OCI-LY7 (cell line): ENCODE measurements at regions of chr19 and their contacts with region 1.

Region 1: DNA sequence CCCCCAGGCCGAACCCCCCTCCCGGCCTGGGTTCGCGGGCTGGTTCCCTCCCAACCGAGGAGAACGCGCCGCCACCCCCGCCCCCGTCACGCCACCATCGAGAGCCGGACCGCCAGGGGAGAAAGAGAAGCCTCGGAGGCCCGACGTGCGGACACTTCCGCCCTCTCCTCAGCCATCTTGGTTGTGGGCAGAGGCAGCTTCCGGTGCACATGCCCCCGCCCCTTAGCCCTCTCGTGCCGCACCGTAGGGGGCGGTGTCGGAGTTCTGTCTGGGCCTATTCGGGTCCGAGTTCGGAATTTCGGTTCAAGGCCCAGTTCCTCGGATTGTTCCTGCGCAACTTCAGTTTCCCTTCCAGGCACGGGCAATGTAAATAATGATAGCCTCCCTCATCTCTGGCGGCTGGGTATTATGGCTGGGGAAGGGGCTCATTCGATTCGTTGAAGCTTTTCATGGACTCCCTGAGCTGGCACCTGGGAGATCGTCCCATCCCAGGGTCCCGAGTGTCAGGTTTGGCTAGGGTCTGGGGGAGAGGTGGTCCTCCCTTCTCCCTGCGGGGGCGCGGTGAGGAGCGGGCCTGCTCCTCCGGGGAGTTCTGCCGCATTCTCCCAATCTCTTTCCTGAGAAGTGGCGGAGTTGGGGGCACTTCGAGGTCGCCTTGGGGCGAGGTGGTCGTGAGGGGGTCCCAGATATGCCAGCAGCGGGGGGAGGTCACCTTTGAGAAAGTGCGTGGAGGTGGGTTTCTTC is at the starts of genes IER2 and STX10:
- DNase-seq: peak; percentile 94
- H3K4me3 ChIP-seq: peak within 1 kb of the TSS; percentile 97
- H3K27ac ChIP-seq: peak within 1 kb of the TSS; percentile 100
- H3K4me1 ChIP-seq: peaks cover 9% of the 10 kb centered on the region
- CTCF ChIP-seq: peak; percentile 77
- total RNA-seq, gene IER2: 61.6 and 64.3 TPM in 2 replicates
- total RNA-seq, gene STX10: 67.8 and 91.7 TPM in 2 replicates

Region 2: DNA sequence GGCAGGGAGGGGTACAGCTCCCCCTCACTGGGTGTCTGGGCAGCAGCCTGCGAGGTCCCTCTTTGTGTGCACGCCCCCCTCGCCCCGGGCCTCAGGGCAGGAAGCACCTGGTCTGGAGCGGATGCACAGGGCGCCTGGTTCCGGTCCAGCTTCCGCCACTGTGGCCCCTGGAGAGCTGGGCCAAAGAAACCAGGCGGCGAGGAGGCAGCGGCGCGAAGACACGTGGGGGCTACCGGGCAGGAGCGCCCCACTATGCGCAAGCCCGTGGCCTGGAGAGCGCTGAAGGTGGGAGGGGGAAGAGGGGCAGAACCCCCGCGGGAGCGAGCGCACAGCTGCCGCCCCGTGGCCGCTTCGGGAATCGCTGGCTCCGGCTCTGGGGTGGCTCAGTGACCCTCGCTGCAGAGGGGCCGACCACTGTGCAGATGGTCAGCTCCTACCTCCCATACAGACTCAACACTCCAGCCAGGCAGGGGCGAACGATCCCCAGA is 46.0 kb before region 1 on chr19:
- CTCF ChIA-PET with region 1: interaction called, 3 read pairs
- POLR2A ChIA-PET with region 1: interaction called, 12 read pairs
- intact Hi-C with region 1: loop called (anchors 1 kb)
- DNase-seq: peak; percentile 96
- H3K4me3 ChIP-seq: peak overlapping the region; percentile 83
- H3K27ac ChIP-seq: peak overlapping the region; percentile 96
- H3K4me1 ChIP-seq: peaks cover 60% of the 10 kb centered on the region
- CTCF ChIP-seq: peak; percentile 85

Region 3: GRCh38 chr19:13117772-13118423 is 32.5 kb before region 1 on chr19 and contains the start of gene NACC1:
- CTCF ChIA-PET with region 1: no interaction called
- POLR2A ChIA-PET with region 1: interaction called, 3 read pairs
- intact Hi-C with region 1: loop called (anchors 1 kb)
- DNase-seq: peak; percentile 95
- H3K4me3 ChIP-seq: peak within 1 kb of the TSS; percentile 94
- H3K27ac ChIP-seq: peak within 1 kb of the TSS; percentile 75
- H3K4me1 ChIP-seq: peaks cover 34% of the 10 kb centered on the region
- CTCF ChIP-seq: no peak
- total RNA-seq, gene NACC1: 46.5 and 56.3 TPM in 2 replicates

Region 4: GRCh38 chr19:13162518-13163314 is 12.4 kb after region 1 on chr19:
- CTCF ChIA-PET with region 1: interaction called, 19 read pairs
- POLR2A ChIA-PET with region 1: interaction called, 13 read pairs
- intact Hi-C with region 1: loop called (anchors 2 kb)
- DNase-seq: peak; percentile 94
- H3K4me3 ChIP-seq: peak overlapping the region; percentile 69
- H3K27ac ChIP-seq: peak overlapping the region; percentile 95
- H3K4me1 ChIP-seq: peaks cover 96% of the 10 kb centered on the region
- CTCF ChIP-seq: no peak

Region 5: DNA sequence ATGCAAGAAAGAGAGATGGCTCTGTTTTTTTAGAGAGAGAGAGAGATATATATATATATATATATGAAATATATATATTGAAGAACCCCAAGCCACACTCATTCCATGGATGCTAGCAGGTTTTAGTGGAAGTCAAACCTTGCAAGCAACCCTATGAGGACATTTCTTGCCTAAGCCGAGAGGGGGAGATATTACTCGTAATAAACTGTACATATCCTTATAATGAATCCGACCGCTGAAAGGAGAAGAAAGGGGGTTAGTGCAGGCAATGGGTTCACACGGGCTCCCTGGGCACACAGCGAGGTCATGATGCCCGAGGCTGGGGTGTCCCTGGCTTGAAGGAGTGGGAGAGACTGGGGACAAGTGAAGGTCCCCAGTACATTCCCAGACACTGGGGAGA is 78.2 kb after region 1 on chr19:
- CTCF ChIA-PET with region 1: no interaction called
- POLR2A ChIA-PET with region 1: no interaction called
- intact Hi-C with region 1: no loop called
- DNase-seq: peak; percentile 53
- H3K4me3 ChIP-seq: no peak overlapping the region
- H3K27ac ChIP-seq: no peak overlapping the region
- H3K4me1 ChIP-seq: no peaks in the 10 kb centered on the region
- CTCF ChIP-seq: peak; percentile 44; the same call in 1 of the 2 replicates